PC-9 (cell line): ENCODE measurements at regions of chr17 and their contacts with region 1.

Region 1: GRCh38 chr17:979538-980405 is at the start of gene NXN:
- DNase-seq: peak; percentile 37 to 91
- H3K4me3 ChIP-seq: peak within 1 kb of the TSS; percentile 92
- H3K27ac ChIP-seq: no peak within 1 kb of the TSS
- H3K4me1 ChIP-seq: peaks cover 41% of the 10 kb centered on the region
- H3K27me3 ChIP-seq: no peaks in the 10 kb centered on the region
- CTCF ChIP-seq: no peak
- total RNA-seq, gene NXN: 59.8 and 60.1 TPM in 2 replicates

Region 2: DNA sequence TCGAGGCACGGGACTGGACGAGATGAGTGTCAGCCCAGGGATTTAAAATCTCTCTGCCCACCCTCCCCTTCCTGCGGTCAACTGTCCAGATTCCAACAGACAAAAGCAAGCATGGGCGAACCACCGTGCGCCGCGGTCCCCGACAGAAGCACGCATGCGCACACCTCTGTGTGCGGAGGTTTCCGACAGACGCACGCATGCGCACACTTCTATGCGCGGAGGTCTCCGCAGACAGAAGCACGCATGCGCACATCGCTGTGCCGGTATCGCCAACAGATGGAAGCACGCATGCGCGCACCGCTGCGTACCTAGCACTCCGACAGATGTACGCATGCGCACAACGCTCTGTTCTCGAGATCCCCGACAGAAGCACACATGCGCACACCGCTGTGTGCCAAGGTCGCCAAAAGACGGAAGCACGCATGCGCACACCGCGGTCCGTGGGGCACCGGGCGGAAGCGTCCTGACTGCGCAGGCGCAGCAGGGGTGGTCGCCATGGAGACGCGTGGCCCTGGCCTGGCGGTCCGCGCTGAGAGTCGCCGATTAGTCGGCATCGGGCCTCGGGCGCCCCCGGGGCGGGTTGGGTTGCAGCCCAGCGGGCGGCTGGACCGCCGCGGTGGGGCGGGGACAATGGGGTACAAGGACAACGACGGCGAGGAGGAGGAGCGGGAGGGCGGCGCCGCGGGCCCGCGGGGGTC is 569.8 kb before region 1 on chr17:
- CTCF ChIA-PET with region 1: interaction called, 13 read pairs
- POLR2A ChIA-PET with region 1: no interaction called
- intact Hi-C with region 1: no loop called
- DNase-seq: peak; percentile 96 to 100
- H3K4me3 ChIP-seq: peak overlapping the region; percentile 97
- H3K27ac ChIP-seq: no peak overlapping the region
- H3K4me1 ChIP-seq: peaks cover 11% of the 10 kb centered on the region
- H3K27me3 ChIP-seq: no peaks in the 10 kb centered on the region
- CTCF ChIP-seq: no peak

Region 3: DNA sequence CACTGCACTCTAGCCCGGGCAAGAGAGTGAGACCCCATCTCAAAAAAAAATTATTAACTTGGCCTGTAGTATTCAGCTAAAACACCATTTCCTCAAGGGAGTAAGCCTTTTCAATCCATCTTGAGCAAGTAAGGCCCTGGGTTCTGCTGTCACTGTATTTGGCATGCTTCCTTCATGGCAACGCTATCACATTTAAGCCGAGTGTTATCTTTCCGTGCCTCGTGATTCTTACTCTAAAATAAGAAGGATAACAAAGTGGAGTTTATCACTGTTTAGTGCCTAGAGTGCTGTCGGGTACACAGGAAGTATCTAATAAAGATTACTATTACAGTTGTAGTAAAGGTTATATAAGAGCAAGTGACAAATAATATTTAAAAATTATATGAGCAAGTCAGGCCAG is 273.9 kb before region 1 on chr17:
- CTCF ChIA-PET with region 1: interaction called, 3 read pairs
- POLR2A ChIA-PET with region 1: interaction called, 4 read pairs
- intact Hi-C with region 1: loop called (anchors 5 kb)
- DNase-seq: no peak
- H3K4me3 ChIP-seq: no peak overlapping the region
- H3K27ac ChIP-seq: no peak overlapping the region
- H3K4me1 ChIP-seq: no peaks in the 10 kb centered on the region
- H3K27me3 ChIP-seq: no peaks in the 10 kb centered on the region
- CTCF ChIP-seq: no peak

Region 4: GRCh38 chr17:781805-782731 is 197.7 kb before region 1 on chr17 and contains the starts of genes GLOD4 and MRM3:
- CTCF ChIA-PET with region 1: interaction called, 13 read pairs
- POLR2A ChIA-PET with region 1: no interaction called
- intact Hi-C with region 1: loop called (anchors 2 kb)
- DNase-seq: peak; percentile 67 to 90
- H3K4me3 ChIP-seq: peak within 1 kb of the TSS; percentile 92
- H3K27ac ChIP-seq: peak within 1 kb of the TSS; percentile 47
- H3K4me1 ChIP-seq: peaks cover 17% of the 10 kb centered on the region
- H3K27me3 ChIP-seq: no peaks in the 10 kb centered on the region
- CTCF ChIP-seq: 0 out of 2 replicates have a peak, but pooled peaks have one; percentile 16
- total RNA-seq, gene GLOD4: 110 and 123 TPM in 2 replicates
- total RNA-seq, gene MRM3: 23.2 and 25.0 TPM in 2 replicates

Region 5: GRCh38 chr17:794876-795275 is 184.9 kb before region 1 on chr17:
- CTCF ChIA-PET with region 1: interaction called, 6 read pairs
- POLR2A ChIA-PET with region 1: interaction called, 7 read pairs
- intact Hi-C with region 1: loop called (anchors 2 kb)
- DNase-seq: peak; percentile 42 to 54
- H3K4me3 ChIP-seq: no peak overlapping the region
- H3K27ac ChIP-seq: no peak overlapping the region
- H3K4me1 ChIP-seq: no peaks in the 10 kb centered on the region
- H3K27me3 ChIP-seq: no peaks in the 10 kb centered on the region
- CTCF ChIP-seq: peak; percentile 82

Region 6: DNA sequence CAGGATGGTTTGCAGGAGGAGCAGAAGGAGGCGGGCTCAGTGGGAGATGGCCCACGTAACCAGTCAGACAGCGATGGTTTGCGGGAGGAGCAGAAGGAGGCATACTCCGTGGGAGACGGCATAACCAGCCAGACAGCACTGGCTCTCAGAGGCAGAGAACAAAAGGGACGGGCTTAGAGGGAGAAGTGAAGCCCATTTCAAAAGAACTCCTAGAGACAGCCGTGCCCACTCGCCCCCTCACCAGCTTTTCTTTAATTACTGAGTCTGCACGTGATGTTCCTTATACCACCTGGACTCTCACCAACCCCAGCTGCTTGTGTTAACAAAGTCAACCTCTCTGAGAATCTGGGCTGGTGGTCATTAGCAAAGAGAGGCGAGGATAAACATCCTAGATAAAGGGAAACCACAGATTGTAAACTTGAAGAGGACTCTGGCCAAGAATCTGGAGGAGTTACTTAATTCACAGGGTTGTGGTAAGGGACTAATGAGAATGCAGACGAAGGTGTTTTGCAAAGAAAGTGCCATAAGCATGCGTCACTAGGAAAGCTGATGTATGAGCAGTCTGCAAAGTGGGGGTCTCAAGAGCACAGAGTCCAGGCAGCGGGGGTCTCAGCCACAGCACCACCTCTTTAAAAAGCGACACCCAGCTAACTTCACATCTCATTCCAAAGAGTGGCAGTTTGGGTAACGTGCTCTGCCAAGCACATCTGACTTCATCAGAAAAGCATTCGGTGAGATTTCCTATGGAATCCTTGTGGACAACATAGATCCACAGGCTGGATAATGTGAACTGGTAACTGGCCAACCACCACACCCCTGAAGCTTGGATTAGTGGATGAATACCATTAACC is 51.9 kb before region 1 on chr17:
- CTCF ChIA-PET with region 1: no interaction called
- POLR2A ChIA-PET with region 1: interaction called, 25 read pairs
- intact Hi-C with region 1: no loop called
- DNase-seq: peak; percentile 83 to 97
- H3K4me3 ChIP-seq: peak overlapping the region; percentile 29; the same call in 1 of the 2 replicates
- H3K27ac ChIP-seq: peak overlapping the region; percentile 84
- H3K4me1 ChIP-seq: peaks cover 60% of the 10 kb centered on the region
- H3K27me3 ChIP-seq: no peaks in the 10 kb centered on the region
- CTCF ChIP-seq: no peak

Region 7: DNA sequence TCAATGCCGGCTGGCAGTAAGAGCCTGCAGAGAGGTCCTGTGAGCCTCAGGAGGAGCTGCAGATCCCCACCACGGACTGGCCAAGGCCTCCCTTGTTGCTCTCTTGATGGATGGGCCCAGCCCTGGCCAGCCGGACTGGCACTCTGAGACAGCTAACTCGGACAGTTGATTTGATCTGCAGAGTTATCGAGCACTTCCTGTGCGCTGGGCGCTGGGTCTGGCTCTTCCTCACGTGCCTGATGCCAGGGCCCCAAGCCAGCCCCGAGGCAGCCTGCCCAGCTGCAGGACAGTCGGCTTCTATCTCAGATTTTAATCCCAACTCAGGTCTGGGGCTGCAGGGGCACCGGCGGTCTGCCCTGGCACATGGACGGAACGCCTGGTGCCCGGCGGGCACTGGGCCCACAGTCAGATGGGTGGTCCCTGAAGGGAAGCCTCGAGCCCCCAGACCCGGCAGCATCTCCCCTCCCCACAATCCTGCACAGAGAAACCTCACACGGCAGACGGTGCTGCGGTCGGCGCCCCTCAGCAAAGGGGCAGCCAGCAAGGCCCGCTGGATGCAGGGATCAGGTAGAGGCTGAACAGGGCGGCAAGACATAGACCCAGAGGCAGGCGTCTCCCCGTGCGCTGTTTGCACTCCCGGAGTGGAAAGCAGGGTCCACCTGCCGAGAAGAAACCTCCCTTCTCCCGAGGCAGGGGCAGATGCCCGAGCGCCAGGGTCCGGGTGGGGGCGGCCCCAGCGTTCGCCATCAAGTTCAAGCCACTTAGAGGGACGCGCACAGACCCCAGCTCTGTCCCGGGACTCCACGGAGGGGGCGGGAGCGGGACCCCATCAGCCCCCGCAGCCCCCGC is 51.1 kb after region 1 on chr17:
- CTCF ChIA-PET with region 1: no interaction called
- POLR2A ChIA-PET with region 1: interaction called, 10 read pairs
- intact Hi-C with region 1: no loop called
- DNase-seq: no peak
- H3K4me3 ChIP-seq: no peak overlapping the region
- H3K27ac ChIP-seq: no peak overlapping the region
- H3K4me1 ChIP-seq: no peaks in the 10 kb centered on the region
- H3K27me3 ChIP-seq: no peaks in the 10 kb centered on the region
- CTCF ChIP-seq: no peak